ENCODE measurements at regions of chr13 and their contacts with region 1.

Region 1: GRCh38 chr13:39616087-39616694 is 13.2 kb upstream of the LHFPL6 start:
- DNase-seq: peak; percentile 72
- H3K4me3 Mint-ChIP-seq: no peak overlapping the region
- H3K27ac Mint-ChIP-seq: no peak overlapping the region
- H3K4me1 Mint-ChIP-seq: no peaks in the 10 kb centered on the region
- H3K27me3 Mint-ChIP-seq: peaks cover 6% of the 10 kb centered on the region
- CTCF ChIP-seq: peak; percentile 83

Region 2: GRCh38 chr13:38819053-38819452 is 797.1 kb before region 1 on chr13:
- CTCF ChIA-PET with region 1: no interaction called
- POLR2A ChIA-PET with region 1: no interaction called
- intact Hi-C with region 1: no loop called
- DNase-seq: peak; percentile 7
- H3K4me3 Mint-ChIP-seq: no peak overlapping the region
- H3K27ac Mint-ChIP-seq: no peak overlapping the region
- H3K4me1 Mint-ChIP-seq: no peaks in the 10 kb centered on the region
- H3K27me3 Mint-ChIP-seq: no peaks in the 10 kb centered on the region
- CTCF ChIP-seq: no peak

Region 3: GRCh38 chr13:39051157-39051556 is 565.0 kb before region 1 on chr13:
- CTCF ChIA-PET with region 1: interaction called, 23 read pairs
- POLR2A ChIA-PET with region 1: interaction called, 3 read pairs
- intact Hi-C with region 1: loop called (anchors 2 kb)
- DNase-seq: peak; percentile 45
- H3K4me3 Mint-ChIP-seq: no peak overlapping the region
- H3K27ac Mint-ChIP-seq: no peak overlapping the region
- H3K4me1 Mint-ChIP-seq: no peaks in the 10 kb centered on the region
- H3K27me3 Mint-ChIP-seq: no peaks in the 10 kb centered on the region
- CTCF ChIP-seq: peak; percentile 51

Region 4: GRCh38 chr13:39273953-39274738 is 342.0 kb before region 1 on chr13:
- CTCF ChIA-PET with region 1: interaction called, 63 read pairs
- POLR2A ChIA-PET with region 1: interaction called, 6 read pairs
- intact Hi-C with region 1: loop called (anchors 1 kb)
- DNase-seq: peak; percentile 18
- H3K4me3 Mint-ChIP-seq: no peak overlapping the region
- H3K27ac Mint-ChIP-seq: no peak overlapping the region
- H3K4me1 Mint-ChIP-seq: no peaks in the 10 kb centered on the region
- H3K27me3 Mint-ChIP-seq: peaks cover 85% of the 10 kb centered on the region
- CTCF ChIP-seq: peak; percentile 27

Region 5: GRCh38 chr13:39602614-39603366 is 13.4 kb before region 1 on chr13 and contains the start of gene LHFPL6:
- CTCF ChIA-PET with region 1: interaction called, 18 read pairs
- POLR2A ChIA-PET with region 1: interaction called, 3 read pairs
- intact Hi-C with region 1: no loop called
- DNase-seq: peak; percentile 74
- H3K4me3 Mint-ChIP-seq: peak within 1 kb of the TSS; percentile 85
- H3K27ac Mint-ChIP-seq: peak within 1 kb of the TSS; percentile 90
- H3K4me1 Mint-ChIP-seq: peaks cover 15% of the 10 kb centered on the region
- H3K27me3 Mint-ChIP-seq: no peaks in the 10 kb centered on the region
- CTCF ChIP-seq: peak; percentile 52
- total RNA-seq, gene LHFPL6: 8.9 and 9.8 TPM in 2 replicates

Region 6: DNA sequence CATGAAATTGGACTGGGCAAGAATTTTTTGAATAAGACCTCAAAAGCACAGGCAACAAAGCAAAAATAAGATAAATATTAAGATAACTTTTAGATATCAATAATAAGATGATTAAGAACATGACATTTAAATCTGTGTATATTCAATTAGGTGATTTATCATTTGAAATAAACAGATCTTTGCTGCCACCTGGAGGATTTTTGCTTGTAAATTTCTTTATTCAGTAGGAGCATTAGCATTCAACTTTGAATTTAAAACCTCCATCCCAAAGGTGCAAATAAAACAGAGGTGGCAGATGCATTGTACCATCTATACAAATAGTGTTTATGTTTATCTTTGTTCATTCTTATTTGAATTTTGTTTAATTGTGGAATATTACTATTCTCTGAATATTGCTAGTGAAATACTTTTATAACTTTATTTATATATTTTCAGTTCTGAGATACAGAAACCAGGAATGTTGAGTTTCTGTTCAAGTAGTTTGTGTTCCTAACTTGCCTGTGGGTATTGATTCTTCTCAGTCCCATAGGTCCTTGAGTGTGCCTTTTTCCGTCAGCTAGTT is 60.2 kb after region 1 on chr13:
- CTCF ChIA-PET with region 1: interaction called, 3 read pairs
- POLR2A ChIA-PET with region 1: interaction called, 3 read pairs
- intact Hi-C with region 1: loop called (anchors 2 kb)
- DNase-seq: peak; percentile 60
- H3K4me3 Mint-ChIP-seq: no peak overlapping the region
- H3K27ac Mint-ChIP-seq: peak overlapping the region; percentile 55
- H3K4me1 Mint-ChIP-seq: no peaks in the 10 kb centered on the region
- H3K27me3 Mint-ChIP-seq: no peaks in the 10 kb centered on the region
- CTCF ChIP-seq: no peak